ENCODE measurements at regions of chr7 and their contacts with region 1.

Region 1: DNA sequence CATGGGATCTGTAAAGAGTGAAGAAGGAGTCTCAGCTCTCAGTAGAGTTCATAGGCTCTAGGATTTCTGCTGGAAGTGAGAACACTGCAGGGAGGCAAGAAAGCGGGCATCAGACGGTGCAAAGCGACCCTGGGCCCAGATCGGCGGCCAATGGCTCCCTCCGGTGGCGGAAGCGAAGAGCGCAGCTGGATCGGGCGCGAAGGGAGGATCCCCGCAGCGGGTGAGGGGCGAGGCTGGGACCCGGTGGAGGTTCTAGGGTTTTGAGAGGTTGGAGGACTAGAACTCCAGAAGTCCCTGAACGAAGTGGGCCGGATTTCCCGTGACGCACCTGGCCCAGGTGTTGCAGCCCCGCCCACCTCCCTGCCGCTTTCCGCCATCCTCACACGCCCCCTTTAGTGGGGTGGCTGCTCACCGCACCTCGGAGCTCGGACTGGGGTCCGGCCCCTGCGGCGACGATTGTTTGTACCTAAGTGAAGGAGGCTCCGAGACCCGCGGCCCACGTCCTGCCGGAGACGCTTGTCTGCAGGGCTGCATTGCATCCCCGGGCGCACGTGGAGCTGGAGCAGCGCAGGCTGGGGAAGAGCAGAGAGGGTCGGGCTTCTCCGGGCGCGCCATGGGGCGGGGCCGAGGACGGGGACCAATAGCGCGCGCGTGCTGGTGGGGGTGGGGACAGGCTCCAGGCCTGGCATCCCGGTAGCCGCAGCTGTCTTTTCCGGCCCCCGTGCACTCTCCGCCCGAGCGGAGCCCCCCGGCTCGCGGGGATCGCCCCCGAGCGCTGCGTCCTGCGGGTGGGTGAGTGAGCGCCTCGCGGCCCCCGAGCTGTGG is at the start of gene SLC12A9:
- DNase-seq: peak; percentile 91
- ATAC-seq: peak; percentile 99
- H3K4me3 Mint-ChIP-seq: peak within 1 kb of the TSS; percentile 89
- H3K27ac Mint-ChIP-seq: peak within 1 kb of the TSS; percentile 67
- H3K4me1 Mint-ChIP-seq: peaks cover 21% of the 10 kb centered on the region
- H3K27me3 Mint-ChIP-seq: no peaks in the 10 kb centered on the region
- total RNA-seq, gene SLC12A9: 28.6 to 30.1 TPM

Region 2: GRCh38 chr7:100793806-100794660 is 58.2 kb before region 1 on chr7:
- CTCF ChIA-PET with region 1: interaction called, 155 read pairs
- DNase-seq: no peak
- ATAC-seq: no peak
- H3K4me3 Mint-ChIP-seq: no peak overlapping the region
- H3K27ac Mint-ChIP-seq: no peak overlapping the region
- H3K4me1 Mint-ChIP-seq: no peaks in the 10 kb centered on the region
- H3K27me3 Mint-ChIP-seq: peaks cover 2% of the 10 kb centered on the region

Region 3: DNA sequence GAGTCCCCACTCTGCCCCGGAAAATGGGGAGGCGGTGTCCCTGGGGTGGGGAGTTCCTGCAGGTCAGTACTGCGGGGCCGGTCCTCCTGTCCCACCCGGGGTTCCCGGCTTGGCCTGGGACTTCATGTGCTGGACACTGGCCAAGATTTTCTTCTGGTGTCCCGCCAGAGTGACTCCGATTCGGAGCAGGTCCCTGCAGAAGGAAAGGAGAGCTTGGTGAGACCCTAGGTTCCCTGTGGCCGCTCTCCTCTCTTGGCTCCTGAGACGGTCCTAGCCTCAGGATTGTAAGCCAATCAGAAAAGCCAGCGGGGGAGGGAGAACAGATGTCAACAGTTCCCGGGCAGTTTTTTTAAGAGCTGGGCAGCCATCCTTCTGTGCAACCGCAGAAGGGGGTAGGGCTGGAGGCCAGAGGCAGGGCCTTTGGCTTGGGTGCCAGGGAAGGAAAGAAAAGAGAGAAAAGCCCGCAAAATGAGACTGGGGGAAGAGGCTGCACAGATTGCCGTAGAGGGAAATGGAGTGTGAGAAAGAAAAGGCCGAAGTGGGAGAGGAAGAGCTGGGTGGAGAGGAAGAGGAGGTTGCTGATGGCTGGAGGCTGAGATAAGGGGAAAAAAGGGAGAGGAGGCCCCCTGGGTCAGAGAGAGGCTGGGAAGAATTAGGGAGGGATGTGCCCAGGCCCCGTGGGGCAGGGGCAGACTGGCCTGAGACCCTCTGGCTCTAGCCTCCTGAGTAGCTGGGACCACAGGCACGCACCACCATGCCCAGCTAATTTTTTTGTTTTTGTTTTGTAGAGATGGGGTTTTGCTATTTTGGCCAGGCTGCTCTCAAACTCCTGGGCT is 48.6 kb before region 1 on chr7:
- CTCF ChIA-PET with region 1: interaction called, 155 read pairs
- DNase-seq: peak; percentile 44
- ATAC-seq: peak; percentile 54
- H3K4me3 Mint-ChIP-seq: no peak overlapping the region
- H3K27ac Mint-ChIP-seq: no peak overlapping the region
- H3K4me1 Mint-ChIP-seq: peaks cover 9% of the 10 kb centered on the region
- H3K27me3 Mint-ChIP-seq: peaks cover 3% of the 10 kb centered on the region

Region 4: GRCh38 chr7:100837099-100837836 is 15.0 kb before region 1 on chr7:
- CTCF ChIA-PET with region 1: interaction called, 38 read pairs
- DNase-seq: peak; percentile 81
- ATAC-seq: peak; percentile 94
- H3K4me3 Mint-ChIP-seq: peak overlapping the region; percentile 59
- H3K27ac Mint-ChIP-seq: peak overlapping the region; percentile 63
- H3K4me1 Mint-ChIP-seq: peaks cover 22% of the 10 kb centered on the region
- H3K27me3 Mint-ChIP-seq: no peaks in the 10 kb centered on the region

Region 5: DNA sequence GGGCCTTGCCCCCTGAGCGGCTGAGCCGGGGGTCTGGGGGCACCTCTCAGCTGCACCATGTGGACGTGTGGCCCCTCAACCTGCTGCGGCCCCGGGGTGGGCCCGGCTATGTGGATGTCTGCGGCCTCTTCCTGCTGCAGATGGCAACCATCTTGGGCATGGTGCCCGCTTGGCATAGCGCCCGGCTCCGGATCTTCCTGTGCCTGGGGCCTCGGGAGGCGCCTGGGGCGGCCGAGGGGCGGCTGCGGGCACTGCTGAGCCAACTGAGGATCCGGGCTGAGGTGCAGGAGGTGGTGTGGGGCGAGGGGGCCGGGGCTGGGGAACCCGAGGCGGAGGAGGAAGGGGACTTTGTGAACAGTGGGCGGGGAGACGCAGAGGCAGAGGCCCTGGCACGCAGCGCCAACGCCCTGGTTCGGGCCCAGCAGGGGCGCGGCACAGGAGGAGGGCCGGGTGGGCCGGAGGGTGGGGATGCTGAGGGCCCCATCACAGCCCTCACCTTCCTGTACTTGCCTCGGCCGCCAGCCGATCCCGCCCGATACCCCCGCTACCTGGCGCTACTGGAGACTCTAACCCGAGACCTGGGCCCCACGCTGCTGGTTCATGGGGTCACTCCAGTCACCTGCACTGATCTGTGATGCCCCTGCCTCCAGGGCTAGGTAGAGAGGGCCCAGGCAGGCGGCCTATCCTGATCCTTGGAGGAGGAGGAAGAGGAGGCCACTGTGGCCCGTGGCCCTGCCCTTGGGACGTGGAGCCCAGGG is 13.9 kb after region 1 on chr7:
- CTCF ChIA-PET with region 1: interaction called, 14 read pairs
- DNase-seq: no peak
- ATAC-seq: no peak
- H3K4me3 Mint-ChIP-seq: peak overlapping the region; percentile 91
- H3K27ac Mint-ChIP-seq: peak overlapping the region; percentile 92
- H3K4me1 Mint-ChIP-seq: peaks cover 22% of the 10 kb centered on the region
- H3K27me3 Mint-ChIP-seq: no peaks in the 10 kb centered on the region

Region 6: GRCh38 chr7:100889761-100890634 is 37.7 kb after region 1 on chr7:
- CTCF ChIA-PET with region 1: interaction called, 11 read pairs
- DNase-seq: peak; percentile 94
- ATAC-seq: peak; percentile 92
- H3K4me3 Mint-ChIP-seq: peak overlapping the region; percentile 77
- H3K27ac Mint-ChIP-seq: peak overlapping the region; percentile 77
- H3K4me1 Mint-ChIP-seq: peaks cover 46% of the 10 kb centered on the region
- H3K27me3 Mint-ChIP-seq: peaks cover 27% of the 10 kb centered on the region

Measured in activated CD8-positive, alpha-beta memory T cell treated with anti-CD3 and anti-CD28 coated beads, Interleukin-2, amount 10 ng/mL, durations not matched to agents 7 days and 5 days (primary cell).